K562 (cell line): ENCODE measurements at regions of chr6 and their contacts with region 1.

Region 1: GRCh38 chr6:31769684-31770371 is 7.3 kb downstream of the VWA7 start:
- DNase-seq: peak; percentile 98 to 100 (median 100)
- ATAC-seq: peak; percentile 91
- H3K4me3 ChIP-seq: no peak overlapping the region
- H3K27ac ChIP-seq: peak overlapping the region; percentile 26; the same call in 2 of the 3 replicates
- H3K4me1 ChIP-seq: peaks cover 24 to 68% of the 10 kb centered on the region in 2 experiments
- H3K27me3 ChIP-seq: no peaks in the 10 kb centered on the region
- CTCF ChIP-seq: peak; percentile 98 to 100 (median 99)
- EP300 ChIP-seq: peak; percentile 28
- POLR2A ChIP-seq: no peak
- RAD21 ChIP-seq: peak; percentile 99 to 100

Region 2: DNA sequence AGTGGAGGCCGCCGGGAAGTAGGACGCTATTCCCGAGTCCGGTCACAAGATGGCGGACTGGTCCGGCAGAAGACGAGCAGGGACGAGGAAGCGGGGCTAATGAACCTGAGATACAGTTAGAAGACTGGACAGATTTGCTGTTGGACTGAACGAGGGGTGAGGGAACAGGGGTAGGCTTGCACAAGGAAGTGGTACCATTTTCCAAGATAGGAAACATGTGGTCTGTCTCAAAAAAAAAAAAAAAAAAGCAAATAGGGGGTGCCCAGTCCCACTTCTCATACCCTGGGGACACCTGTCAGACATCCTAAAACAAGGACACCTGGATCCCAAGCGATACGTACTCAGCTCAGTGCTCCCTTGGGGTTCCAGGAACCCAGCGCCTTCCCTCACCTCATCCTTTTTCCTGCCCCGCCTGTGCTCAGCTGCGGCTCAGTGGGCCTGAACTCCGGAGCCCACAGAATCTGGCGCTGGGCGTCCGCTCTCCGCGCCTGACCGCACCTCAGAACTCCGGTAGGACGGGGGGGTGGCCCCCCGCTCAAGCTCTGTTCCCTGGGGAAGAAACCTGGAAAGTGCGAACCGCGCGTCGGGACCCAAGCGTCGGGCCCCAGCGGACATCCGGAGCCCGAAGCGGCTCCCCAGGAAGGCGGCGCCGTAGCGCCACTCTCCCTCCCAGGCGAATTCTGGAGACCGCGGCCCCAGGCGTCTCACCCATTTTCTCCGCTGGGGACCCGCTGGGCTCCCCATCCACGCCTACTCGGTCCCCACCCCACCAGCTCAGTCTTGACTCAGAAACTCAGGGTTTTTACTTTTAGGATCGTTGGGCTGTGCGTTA is 88.8 kb before region 1 on chr6 and contains the start of gene LY6G5C:
- CTCF ChIA-PET with region 1: interaction called, 35 read pairs
- POLR2A ChIA-PET with region 1: interaction called, 4 read pairs
- in situ Hi-C with region 1: loop called (anchors 5 kb)
- intact Hi-C with region 1: loop called (anchors 1 kb)
- DNase-seq: peak; percentile 82 to 94 (median 88)
- ATAC-seq: peak; percentile 88
- H3K4me3 ChIP-seq: no peak within 1 kb of the TSS
- H3K27ac ChIP-seq: no peak within 1 kb of the TSS
- H3K4me1 ChIP-seq: peaks cover 10 to 24% of the 10 kb centered on the region in 2 experiments
- H3K27me3 ChIP-seq: no peaks in the 10 kb centered on the region
- CTCF ChIP-seq: peak; percentile 96 to 99 (median 99)
- EP300 ChIP-seq: peak; percentile 39; the same call in 1 of the 2 replicates
- POLR2A ChIP-seq: no peak
- RAD21 ChIP-seq: peak; percentile 99 to 100
- polyA plus RNA-seq, gene LY6G5C: 0.10 TPM in 1 of 2 experiments, not detected in the other